Activated CD4-positive, alpha-beta T cell treated with anti-CD3 and anti-CD28 coated beads, Interleukin-2, amount 10 ng/mL, durations not matched to agents 24 days and 14 days (primary cell): ENCODE measurements at regions of chr7 and their contacts with region 1.

Region 1: DNA sequence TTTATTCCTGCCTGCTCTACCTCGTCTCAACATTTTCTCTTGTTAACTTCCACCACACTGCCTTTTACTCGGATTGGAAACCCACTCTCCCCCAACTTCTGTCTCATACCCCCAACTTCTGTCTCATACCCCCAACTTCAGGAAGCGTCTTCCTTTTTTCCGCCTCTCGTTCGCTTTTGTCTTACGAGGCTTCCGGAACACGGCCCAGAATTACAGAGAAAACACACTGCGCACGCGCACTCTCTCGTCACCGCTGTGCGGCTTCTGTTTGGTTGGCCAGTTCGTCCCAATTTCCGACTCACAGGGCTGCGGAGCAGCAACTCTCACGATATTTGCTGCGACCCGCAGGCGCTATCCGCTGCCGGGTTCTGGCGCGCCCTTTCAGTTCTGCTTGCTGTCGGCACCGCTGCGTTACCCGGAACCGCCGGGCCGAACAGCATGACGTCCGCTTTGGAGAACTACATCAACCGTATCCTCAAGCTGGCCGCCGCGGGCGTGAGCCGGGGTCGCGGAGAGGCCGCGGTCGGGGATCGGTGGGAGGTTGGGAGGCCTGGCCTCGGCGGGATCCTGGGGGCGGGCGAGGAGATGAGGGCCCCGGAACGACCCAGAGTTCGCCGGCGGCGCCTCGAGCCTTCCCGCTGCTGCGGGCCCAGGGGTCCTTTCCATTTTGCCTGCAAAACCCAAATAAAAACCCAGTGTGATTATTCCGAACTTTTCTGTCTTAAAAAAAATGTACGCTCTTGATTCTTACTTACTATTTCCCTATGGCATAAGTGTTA is at the start of gene LSM8:
- DNase-seq: peak; percentile 99
- H3K4me3 Mint-ChIP-seq: peak within 1 kb of the TSS; percentile 99
- H3K27ac Mint-ChIP-seq: peak within 1 kb of the TSS; percentile 99
- H3K4me1 Mint-ChIP-seq: peaks cover 32% of the 10 kb centered on the region
- H3K27me3 Mint-ChIP-seq: no peaks in the 10 kb centered on the region
- total RNA-seq, gene LSM8: 49.4 and 59.9 TPM in 2 replicates

Region 2: GRCh38 chr7:118080947-118081346 is 103.0 kb before region 1 on chr7:
- intact Hi-C with region 1: loop called (anchors 5 kb)
- DNase-seq: peak; percentile 80
- H3K4me3 Mint-ChIP-seq: peak overlapping the region; percentile 35
- H3K27ac Mint-ChIP-seq: peak overlapping the region; percentile 57
- H3K4me1 Mint-ChIP-seq: peaks cover 19% of the 10 kb centered on the region
- H3K27me3 Mint-ChIP-seq: no peaks in the 10 kb centered on the region

Region 3: DNA sequence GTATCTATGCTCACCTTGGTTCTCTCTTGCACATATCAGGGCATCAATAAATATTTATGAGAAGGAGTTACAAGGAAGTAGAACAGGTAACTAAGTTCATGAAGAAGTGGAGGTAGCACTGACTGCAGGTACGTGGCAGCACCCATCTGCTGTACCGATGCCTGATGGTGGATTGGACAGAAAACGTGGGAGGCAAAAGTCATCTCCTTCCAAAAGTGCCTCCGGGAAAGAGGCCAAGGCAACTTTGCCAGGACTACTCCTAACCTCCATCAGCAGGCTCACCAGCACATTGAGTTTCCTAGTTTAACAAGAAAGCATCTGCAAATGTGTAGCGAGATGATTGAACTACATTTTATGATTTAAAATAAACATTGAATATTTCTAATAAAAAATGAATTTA is 289.3 kb after region 1 on chr7:
- intact Hi-C with region 1: no loop called
- DNase-seq: no peak
- H3K4me3 Mint-ChIP-seq: no peak overlapping the region
- H3K27ac Mint-ChIP-seq: no peak overlapping the region
- H3K4me1 Mint-ChIP-seq: no peaks in the 10 kb centered on the region
- H3K27me3 Mint-ChIP-seq: no peaks in the 10 kb centered on the region